A673 (cell line): ENCODE measurements at regions of chr12 and their contacts with region 1.

Region 1: GRCh38 chr12:30774599-30774998 is 19.8 kb upstream of the CAPRIN2 start:
- DNase-seq: no peak
- H3K4me3 ChIP-seq: no peak overlapping the region
- H3K27ac ChIP-seq: no peak overlapping the region
- H3K4me1 ChIP-seq: no peaks in the 10 kb centered on the region
- H3K27me3 ChIP-seq: no peaks in the 10 kb centered on the region
- CTCF ChIP-seq: no peak

Region 2: GRCh38 chr12:30570211-30570890 is 204.2 kb before region 1 on chr12:
- CTCF ChIA-PET with region 1: no interaction called
- POLR2A ChIA-PET with region 1: no interaction called
- intact Hi-C with region 1: no loop called
- DNase-seq: no peak
- H3K4me3 ChIP-seq: no peak overlapping the region
- H3K27ac ChIP-seq: no peak overlapping the region
- H3K4me1 ChIP-seq: no peaks in the 10 kb centered on the region
- H3K27me3 ChIP-seq: no peaks in the 10 kb centered on the region
- CTCF ChIP-seq: no peak

Region 3: GRCh38 chr12:30695199-30696103 is 79.1 kb before region 1 on chr12 and contains the start of gene IPO8:
- CTCF ChIA-PET with region 1: interaction called, 19 read pairs
- POLR2A ChIA-PET with region 1: no interaction called
- intact Hi-C with region 1: no loop called
- DNase-seq: peak; percentile 97
- H3K4me3 ChIP-seq: peak within 1 kb of the TSS; percentile 83
- H3K27ac ChIP-seq: peak within 1 kb of the TSS; percentile 81
- H3K4me1 ChIP-seq: peaks cover 11% of the 10 kb centered on the region
- H3K27me3 ChIP-seq: no peaks in the 10 kb centered on the region
- CTCF ChIP-seq: peak; percentile 57
- total RNA-seq, gene IPO8: 37.9 and 42.7 TPM in 2 replicates

Region 4: GRCh38 chr12:30795410-30796312 is 21.1 kb after region 1 on chr12:
- CTCF ChIA-PET with region 1: no interaction called
- POLR2A ChIA-PET with region 1: no interaction called
- intact Hi-C with region 1: no loop called
- DNase-seq: peak; percentile 89
- H3K4me3 ChIP-seq: peak overlapping the region; percentile 61
- H3K27ac ChIP-seq: peak overlapping the region; percentile 60
- H3K4me1 ChIP-seq: peaks cover 36% of the 10 kb centered on the region
- H3K27me3 ChIP-seq: no peaks in the 10 kb centered on the region
- CTCF ChIP-seq: 0 out of 2 replicates have a peak, but pooled peaks have one; percentile 8